ENCODE measurements at regions of chr5 and their contacts with region 1.

Region 1: GRCh38 chr5:73274866-73275663 is 102.1 kb downstream of the TMEM174 start:
- DNase-seq: peak; percentile 44 to 85 (median 78)
- H3K4me3 ChIP-seq: peak overlapping the region in 32 of 59 donors; percentile 1 to 46 (median 22)
- H3K27ac ChIP-seq: peak overlapping the region in 44 of 59 donors; percentile 5 to 77 (median 52)
- H3K27me3 ChIP-seq: peaks cover 0 to 50% (median 7%) of the 10 kb centered on the region in 45 donors
- CTCF ChIP-seq: peak in 8 of 56 donors; percentile 8 to 29 (median 14)

Region 2: GRCh38 chr5:72194846-72195245 is 1080.2 kb before region 1 on chr5:
- intact Hi-C with region 1: loop called in 1 of 2 experiments (anchors 10 kb)
- DNase-seq: no peak
- H3K4me3 ChIP-seq: no peak overlapping the region
- H3K27ac ChIP-seq: peak overlapping the region in 8 of 59 donors; percentile 4 to 44 (median 30)
- H3K27me3 ChIP-seq: no peaks in the 10 kb centered on the region
- CTCF ChIP-seq: no peak

Region 3: GRCh38 chr5:73215891-73216610 is 59.0 kb before region 1 on chr5:
- intact Hi-C with region 1: loop called in 1 of 2 experiments (anchors 5 kb)
- DNase-seq: peak in 8 of 10 donors; percentile 42 to 80 (median 59)
- H3K4me3 ChIP-seq: peak overlapping the region in 58 of 59 donors; percentile 8 to 61 (median 48)
- H3K27ac ChIP-seq: peak overlapping the region in 5 of 59 donors; percentile 2 to 31 (median 22)
- H3K27me3 ChIP-seq: peaks cover 0 to 95% (median 69%) of the 10 kb centered on the region in 45 donors
- CTCF ChIP-seq: peak; percentile 44 to 94 (median 83)

Region 4: DNA sequence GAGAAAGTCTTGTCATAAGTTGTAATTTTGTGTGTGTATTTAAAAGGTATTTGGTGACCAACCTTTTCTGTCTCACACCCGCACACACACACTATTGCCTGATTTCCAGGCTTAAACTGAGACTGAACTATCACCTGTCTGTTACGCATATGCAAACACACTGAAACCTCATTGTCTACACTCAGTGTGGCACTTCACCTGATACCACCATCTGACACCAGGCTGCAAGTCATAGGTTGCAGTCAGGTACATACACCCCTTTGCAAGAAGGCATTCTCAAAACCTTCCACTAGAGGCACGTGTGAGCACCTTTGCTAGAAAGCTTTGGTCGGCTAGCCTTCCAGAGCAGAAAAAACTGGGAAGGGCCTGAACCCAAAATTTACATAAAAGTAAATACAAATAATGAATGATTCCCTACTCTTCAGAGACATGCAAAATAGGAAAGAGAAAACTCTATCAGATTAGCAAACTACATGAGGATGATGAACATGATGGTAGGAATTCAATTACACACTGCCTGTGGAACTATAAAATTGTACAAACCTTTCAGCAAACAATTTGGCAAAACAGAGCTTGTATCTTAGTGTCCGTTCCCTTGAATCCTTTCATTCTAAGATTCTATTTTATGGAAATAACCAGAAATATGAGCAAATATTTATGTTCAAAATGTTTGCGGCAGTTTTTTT is 179.4 kb after region 1 on chr5:
- intact Hi-C with region 1: loop called in 1 of 2 experiments (anchors 10 kb)
- DNase-seq: no peak
- H3K4me3 ChIP-seq: no peak overlapping the region
- H3K27ac ChIP-seq: no peak overlapping the region
- H3K27me3 ChIP-seq: peaks cover 6 to 97% (median 59%) of the 10 kb centered on the region in 45 donors
- CTCF ChIP-seq: peak in 54 of 56 donors; percentile 5 to 68 (median 48)

Measured in dorsolateral prefrontal cortex (tissue), 120 donors.